Heart right ventricle (tissue), 16 donors: ENCODE measurements at regions of chr5 and their contacts with region 1.

Region 1: DNA sequence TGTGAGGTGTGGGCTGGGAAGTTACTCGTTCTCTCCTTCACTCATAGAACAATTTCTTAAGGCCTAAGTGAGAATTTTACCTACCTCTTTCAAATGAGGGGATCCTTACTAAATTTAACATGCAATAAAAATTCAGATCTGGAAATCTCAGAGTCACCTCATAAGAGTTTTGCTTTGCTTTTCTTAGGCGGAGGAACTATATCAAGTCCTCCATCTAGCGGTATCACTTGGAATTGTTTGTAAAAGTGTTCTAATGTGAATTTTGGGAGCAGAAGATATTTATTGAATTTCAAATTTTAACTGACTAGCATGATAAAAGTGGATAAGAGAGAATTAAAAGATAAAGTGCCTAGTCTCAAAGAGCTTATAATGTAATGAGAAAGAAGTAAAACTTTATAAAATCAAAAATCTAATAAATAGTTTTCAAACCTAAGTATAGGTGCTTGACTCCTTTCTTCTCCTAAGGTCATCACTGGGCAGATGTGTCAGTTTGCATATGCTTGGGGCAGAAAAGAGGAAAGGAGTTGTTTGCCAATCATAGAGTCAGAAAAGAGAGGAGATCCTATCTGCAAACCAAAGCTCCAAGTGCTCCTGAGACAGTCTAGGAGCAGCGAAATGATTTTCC is 145.7 kb upstream of the DAB2 start:
- DNase-seq: no peak
- ATAC-seq: no peak
- H3K4me3 ChIP-seq: no peak overlapping the region
- H3K27ac ChIP-seq: no peak overlapping the region
- H3K4me1 ChIP-seq: peaks cover 0 to 8% (median 0%) of the 10 kb centered on the region in 9 donors
- H3K27me3 ChIP-seq: peaks cover 0 to 13% (median 0%) of the 10 kb centered on the region in 7 donors
- CTCF ChIP-seq: peak; percentile 42 to 78 (median 65)

Region 2: GRCh38 chr5:39224196-39224761 is 346.2 kb before region 1 on chr5:
- intact Hi-C with region 1: loop called in 7 of 10 experiments (anchors 2 to 10 kb)
- DNase-seq: no peak
- ATAC-seq: peak in 1 of 8 donors; percentile 76
- H3K4me3 ChIP-seq: no peak overlapping the region
- H3K27ac ChIP-seq: peak overlapping the region in 1 of 10 donors; percentile 59
- H3K4me1 ChIP-seq: peaks cover 0 to 77% (median 0%) of the 10 kb centered on the region in 9 donors
- H3K27me3 ChIP-seq: no peaks in the 10 kb centered on the region
- CTCF ChIP-seq: no peak

Region 3: GRCh38 chr5:39387293-39387692 is 183.2 kb before region 1 on chr5:
- intact Hi-C with region 1: no loop called
- DNase-seq: no peak
- ATAC-seq: no peak
- H3K4me3 ChIP-seq: no peak overlapping the region
- H3K27ac ChIP-seq: no peak overlapping the region
- H3K4me1 ChIP-seq: peaks cover 0 to 3% (median 0%) of the 10 kb centered on the region in 9 donors
- H3K27me3 ChIP-seq: no peaks in the 10 kb centered on the region
- CTCF ChIP-seq: no peak

Region 4: DNA sequence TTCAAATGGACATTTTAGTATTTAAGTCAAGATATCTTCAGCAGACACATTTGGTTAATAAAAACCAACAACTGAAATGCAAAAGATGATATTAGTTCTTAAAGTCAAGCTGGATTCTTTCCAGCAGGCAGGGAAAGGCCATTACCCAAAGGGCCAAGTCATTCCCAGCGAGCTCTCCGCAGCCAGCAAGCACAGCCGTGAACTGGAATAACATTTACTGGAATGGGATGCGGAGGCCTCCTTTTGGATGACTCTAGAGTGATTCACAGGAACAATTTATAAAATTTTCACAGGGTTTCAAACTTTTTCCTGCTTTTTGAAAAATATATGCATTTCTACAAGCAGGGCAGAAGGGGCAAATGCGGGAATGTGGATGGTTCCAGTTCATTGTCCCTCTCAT is 69.1 kb before region 1 on chr5:
- intact Hi-C with region 1: no loop called
- DNase-seq: peak; percentile 40 to 59
- ATAC-seq: peak; percentile 59 to 80 (median 74)
- H3K4me3 ChIP-seq: no peak overlapping the region
- H3K27ac ChIP-seq: peak overlapping the region in 7 of 10 donors; percentile 49 to 84 (median 73)
- H3K4me1 ChIP-seq: peaks cover 0 to 46% (median 24%) of the 10 kb centered on the region in 9 donors
- H3K27me3 ChIP-seq: no peaks in the 10 kb centered on the region
- CTCF ChIP-seq: no peak